Dorsolateral prefrontal cortex (tissue), 120 donors: ENCODE measurements at regions of chr18 and their contacts with region 1.

Region 1: GRCh38 chr18:40159141-40160017 is 1795.7 kb upstream of the PIK3C3 start:
- DNase-seq: no peak
- H3K4me3 ChIP-seq: peak overlapping the region in 9 of 59 donors; percentile 4 to 39 (median 19)
- H3K27ac ChIP-seq: no peak overlapping the region
- H3K27me3 ChIP-seq: no peaks in the 10 kb centered on the region
- CTCF ChIP-seq: peak in 55 of 56 donors; percentile 37 to 77 (median 63)

Region 2: GRCh38 chr18:39841482-39842365 is 317.7 kb before region 1 on chr18:
- intact Hi-C with region 1: loop called in 1 of 2 experiments (anchors 10 kb)
- DNase-seq: peak; percentile 60 to 84 (median 81)
- H3K4me3 ChIP-seq: peak overlapping the region; percentile 17 to 75 (median 59)
- H3K27ac ChIP-seq: peak overlapping the region in 52 of 59 donors; percentile 2 to 83 (median 60)
- H3K27me3 ChIP-seq: no peaks in the 10 kb centered on the region
- CTCF ChIP-seq: peak in 54 of 56 donors; percentile 29 to 73 (median 58)

Region 3: DNA sequence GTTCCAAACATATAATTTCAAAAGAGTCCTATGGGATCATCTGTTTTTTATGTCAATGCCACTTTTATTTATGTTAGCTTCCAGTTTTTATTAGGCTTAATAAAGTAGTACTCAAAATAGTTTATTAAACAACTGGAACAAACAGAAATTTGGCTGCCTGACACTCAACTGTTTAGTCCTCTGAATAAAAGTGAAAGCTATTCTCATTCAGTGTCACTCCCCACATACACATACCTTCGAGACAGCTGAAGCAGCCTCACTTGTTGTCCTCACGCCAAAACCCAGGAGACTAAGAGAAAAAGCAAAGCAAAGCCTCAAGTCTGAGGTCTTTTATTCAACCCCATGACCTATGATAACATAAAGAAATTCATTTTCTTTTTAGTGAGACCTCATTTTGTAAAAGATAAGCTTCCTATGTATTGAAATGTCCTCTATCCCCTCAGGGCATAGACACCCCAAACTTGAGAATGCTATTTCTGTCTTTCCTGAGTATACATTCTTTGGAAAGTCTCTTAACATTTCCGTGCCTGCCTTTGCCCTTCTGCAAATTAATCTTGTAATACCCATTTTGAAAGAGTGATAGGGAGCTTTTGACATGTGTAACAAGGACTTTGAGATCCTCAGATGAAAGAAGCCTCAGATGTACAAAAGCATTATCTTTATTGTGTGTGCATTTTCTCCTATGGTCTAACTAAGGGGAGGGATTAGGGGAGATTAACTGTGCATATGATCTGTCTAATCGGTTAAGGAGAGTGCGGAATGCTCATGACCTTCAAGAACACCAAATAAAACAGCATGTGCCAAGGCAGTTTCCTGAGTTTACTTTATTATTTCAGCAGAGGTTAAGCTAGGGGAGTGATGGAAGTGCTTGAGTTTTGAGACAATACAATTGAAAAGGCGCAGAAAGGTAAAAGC is 271.9 kb after region 1 on chr18:
- intact Hi-C with region 1: no loop called
- DNase-seq: no peak
- H3K4me3 ChIP-seq: no peak overlapping the region
- H3K27ac ChIP-seq: no peak overlapping the region
- H3K27me3 ChIP-seq: no peaks in the 10 kb centered on the region
- CTCF ChIP-seq: no peak

Region 4: DNA sequence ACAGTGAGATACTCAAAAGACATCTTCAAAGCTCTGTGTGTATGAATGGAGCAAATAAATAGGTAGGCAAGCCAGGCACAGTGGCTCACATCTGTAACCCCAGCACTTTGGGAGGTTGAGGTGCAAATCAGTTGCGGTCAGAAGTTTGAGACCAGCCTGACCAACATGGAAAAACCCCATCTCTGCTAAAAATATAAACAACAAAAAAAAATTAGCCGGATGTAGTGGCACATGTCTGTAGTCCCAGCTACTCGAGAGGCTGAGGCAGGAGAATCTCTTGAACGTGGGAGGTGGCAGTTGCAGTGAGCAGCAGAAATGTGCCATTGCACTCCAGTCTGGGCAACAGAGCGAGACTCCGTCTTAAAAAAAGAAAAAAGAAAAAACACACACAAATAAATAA is 850.5 kb after region 1 on chr18:
- intact Hi-C with region 1: no loop called
- DNase-seq: no peak
- H3K4me3 ChIP-seq: no peak overlapping the region
- H3K27ac ChIP-seq: no peak overlapping the region
- H3K27me3 ChIP-seq: no peaks in the 10 kb centered on the region
- CTCF ChIP-seq: no peak